Activated CD8-positive, alpha-beta memory T cell treated with anti-CD3 and anti-CD28 coated beads, Interleukin-2, amount 10 ng/mL, durations not matched to agents 7 days and 5 days (primary cell): ENCODE measurements at regions of chr12 and their contacts with region 1.

Region 1: GRCh38 chr12:123983822-123984485 is 10.9 kb downstream of the ZNF664 start:
- DNase-seq: peak; percentile 61
- ATAC-seq: peak; percentile 83
- H3K4me3 Mint-ChIP-seq: no peak overlapping the region
- H3K27ac Mint-ChIP-seq: no peak overlapping the region
- H3K4me1 Mint-ChIP-seq: peaks cover 15% of the 10 kb centered on the region
- H3K27me3 Mint-ChIP-seq: no peaks in the 10 kb centered on the region

Region 2: GRCh38 chr12:123995023-123995748 is 11.2 kb after region 1 on chr12:
- CTCF ChIA-PET with region 1: interaction called, 21 read pairs
- DNase-seq: peak; percentile 39
- ATAC-seq: peak; percentile 39
- H3K4me3 Mint-ChIP-seq: no peak overlapping the region
- H3K27ac Mint-ChIP-seq: no peak overlapping the region
- H3K4me1 Mint-ChIP-seq: peaks cover 26% of the 10 kb centered on the region
- H3K27me3 Mint-ChIP-seq: no peaks in the 10 kb centered on the region

Region 3: DNA sequence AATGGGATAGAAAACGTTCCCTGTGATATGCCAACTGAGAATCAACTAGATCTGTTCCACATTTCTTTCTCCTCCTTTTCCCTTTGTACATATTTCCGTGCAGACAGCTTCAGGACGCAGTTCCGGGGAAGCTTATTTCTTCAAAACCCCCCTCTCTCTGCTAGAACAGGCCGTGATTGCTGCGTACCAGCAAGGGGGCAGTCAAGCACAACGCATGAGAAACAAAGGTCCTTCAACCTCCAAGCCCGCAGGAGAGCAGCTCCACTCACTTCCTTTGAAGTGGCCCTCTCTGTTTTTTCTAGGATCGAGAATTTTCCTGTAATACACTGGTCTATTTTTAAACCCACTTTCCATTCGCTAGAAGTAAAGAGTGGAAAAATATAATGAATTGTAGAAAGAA is 69.9 kb after region 1 on chr12:
- CTCF ChIA-PET with region 1: no interaction called
- DNase-seq: no peak
- ATAC-seq: no peak
- H3K4me3 Mint-ChIP-seq: no peak overlapping the region
- H3K27ac Mint-ChIP-seq: no peak overlapping the region
- H3K4me1 Mint-ChIP-seq: no peaks in the 10 kb centered on the region
- H3K27me3 Mint-ChIP-seq: peaks cover 12% of the 10 kb centered on the region